HCT116 (cell line): ENCODE measurements at regions of chr1 and their contacts with region 1.

Region 1: DNA sequence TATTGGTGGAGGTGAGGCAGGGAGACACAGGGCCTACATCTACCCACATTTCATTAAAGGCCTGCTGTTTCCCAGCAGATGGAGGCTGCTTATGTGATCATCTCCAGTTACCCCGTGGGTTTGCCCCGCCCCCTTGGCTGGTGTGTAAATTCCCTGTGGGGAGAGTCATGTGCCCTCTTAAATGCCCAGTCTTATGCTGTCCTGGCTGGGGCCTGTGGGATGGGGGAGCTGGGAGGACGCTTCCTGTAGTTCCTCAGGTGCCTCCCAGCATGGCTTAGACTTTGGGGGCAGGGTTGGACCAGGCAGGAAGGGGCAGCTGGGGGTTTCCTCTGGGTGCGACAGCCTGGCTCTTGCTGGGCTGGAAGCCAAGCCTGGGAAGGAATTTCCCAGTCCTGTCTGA is 15.5 kb upstream of the CITED4 start:
- DNase-seq: no peak
- ATAC-seq: peak; percentile 68
- H3K4me3 ChIP-seq: peak overlapping the region in 1 of 2 experiments; percentile 13; a peak in 1 of 4 replicates
- H3K27ac ChIP-seq: peak overlapping the region; percentile 43
- H3K4me1 ChIP-seq: peaks cover 36 to 78% of the 10 kb centered on the region in 2 experiments
- H3K27me3 ChIP-seq: no peaks in the 10 kb centered on the region
- CTCF ChIP-seq: no peak
- POLR2A ChIP-seq: no peak
- RAD21 ChIP-seq: no peak

Region 2: DNA sequence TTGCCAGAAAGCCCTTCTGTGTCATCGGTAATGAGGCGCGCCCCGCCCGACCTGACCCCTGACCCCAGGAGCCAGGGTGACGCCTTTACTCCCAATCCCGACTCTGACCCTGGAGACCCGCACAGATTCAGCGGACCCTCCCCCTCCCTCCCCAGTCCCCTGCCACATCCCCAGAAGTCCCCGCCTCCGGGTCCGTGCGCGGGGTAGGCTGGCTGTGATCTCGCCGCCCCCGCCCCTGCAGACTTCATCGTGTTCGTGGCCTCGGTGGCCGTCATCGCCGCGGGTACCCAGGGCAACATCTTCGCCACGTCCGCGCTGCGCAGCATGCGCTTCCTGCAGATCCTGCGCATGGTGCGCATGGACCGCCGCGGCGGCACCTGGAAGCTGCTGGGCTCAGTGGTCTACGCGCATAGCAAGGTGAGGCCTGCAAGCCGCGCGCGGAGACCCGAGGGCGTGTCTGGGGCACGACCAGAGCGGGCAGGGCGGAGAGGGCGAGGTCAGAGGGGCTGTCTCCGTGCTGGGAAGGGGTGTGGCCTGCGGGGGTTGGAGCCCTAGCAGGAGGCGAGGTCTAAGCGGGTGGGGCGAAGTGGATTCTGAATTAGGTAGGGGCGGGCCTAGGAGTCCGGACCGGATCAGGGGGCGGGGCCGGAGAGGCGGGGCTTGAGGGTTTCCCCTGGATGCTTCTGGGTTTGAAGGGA is 59.3 kb before region 1 on chr1:
- CTCF ChIA-PET with region 1: no interaction called
- POLR2A ChIA-PET with region 1: no interaction called
- RAD21 ChIA-PET with region 1: no interaction called
- intact Hi-C with region 1: no loop called
- DNase-seq: no peak
- ATAC-seq: peak; percentile 81
- H3K4me3 ChIP-seq: no peak overlapping the region
- H3K27ac ChIP-seq: no peak overlapping the region
- H3K4me1 ChIP-seq: no peaks in the 10 kb centered on the region
- H3K27me3 ChIP-seq: no peaks in the 10 kb centered on the region
- CTCF ChIP-seq: no peak
- POLR2A ChIP-seq: no peak
- RAD21 ChIP-seq: no peak

Region 3: GRCh38 chr1:40862008-40862863 is 15.5 kb before region 1 on chr1 and contains the start of gene CITED4:
- CTCF ChIA-PET with region 1: interaction called, 8 read pairs
- POLR2A ChIA-PET with region 1: interaction called, 12 read pairs
- RAD21 ChIA-PET with region 1: interaction called in 1 of 2 experiments, 3 read pairs
- intact Hi-C with region 1: no loop called
- DNase-seq: peak; percentile 91
- ATAC-seq: peak; percentile 96
- H3K4me3 ChIP-seq: peak within 1 kb of the TSS; percentile 33 to 62
- H3K27ac ChIP-seq: peak within 1 kb of the TSS; percentile 43; the same call in 1 of the 2 replicates
- H3K4me1 ChIP-seq: peaks cover 11 to 37% of the 10 kb centered on the region in 2 experiments; a peak in 3 of 4 replicates
- H3K27me3 ChIP-seq: no peaks in the 10 kb centered on the region
- CTCF ChIP-seq: peak; percentile 39 to 78 (median 45)
- POLR2A ChIP-seq: no peak
- RAD21 ChIP-seq: peak; percentile 91
- total RNA-seq, gene CITED4: 7.8 TPM

Region 4: DNA sequence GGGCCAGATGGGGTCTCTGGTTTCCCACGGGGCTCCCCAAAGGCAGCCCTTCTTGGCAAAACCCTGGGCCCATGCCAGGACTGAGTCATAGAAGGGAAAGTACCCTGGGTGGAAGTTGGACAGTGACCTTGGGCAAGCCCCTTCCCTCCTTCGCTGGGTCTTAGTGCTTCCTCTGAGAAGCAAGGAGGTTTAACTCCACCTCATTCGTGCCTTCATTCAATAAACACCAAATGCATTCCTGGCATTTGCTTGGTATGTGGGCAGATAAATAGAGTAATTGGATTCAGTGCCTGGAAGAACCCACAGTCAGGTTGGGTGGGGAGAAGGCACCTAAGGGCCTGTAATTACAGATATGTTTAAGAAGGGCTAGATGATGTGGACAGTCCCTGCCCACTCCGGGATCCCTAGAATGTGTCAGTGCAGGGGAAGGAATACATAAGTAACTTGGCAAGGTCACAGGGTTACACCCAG is 20.8 kb after region 1 on chr1:
- CTCF ChIA-PET with region 1: no interaction called
- POLR2A ChIA-PET with region 1: interaction called, 8 read pairs
- RAD21 ChIA-PET with region 1: no interaction called
- intact Hi-C with region 1: loop called (anchors 2 kb)
- DNase-seq: no peak
- ATAC-seq: 0 out of 2 replicates have a peak, but pooled peaks have one; percentile 3
- H3K4me3 ChIP-seq: peak overlapping the region in 1 of 2 experiments; percentile 43; a peak in 1 of 4 replicates
- H3K27ac ChIP-seq: peak overlapping the region; percentile 70
- H3K4me1 ChIP-seq: peaks cover 37 to 71% of the 10 kb centered on the region in 2 experiments
- H3K27me3 ChIP-seq: no peaks in the 10 kb centered on the region
- CTCF ChIP-seq: no peak
- POLR2A ChIP-seq: no peak
- RAD21 ChIP-seq: no peak

Region 5: GRCh38 chr1:40971966-40972365 is 94.3 kb after region 1 on chr1:
- CTCF ChIA-PET with region 1: no interaction called
- POLR2A ChIA-PET with region 1: no interaction called
- RAD21 ChIA-PET with region 1: no interaction called
- intact Hi-C with region 1: no loop called
- DNase-seq: no peak
- ATAC-seq: no peak
- H3K4me3 ChIP-seq: no peak overlapping the region
- H3K27ac ChIP-seq: no peak overlapping the region
- H3K4me1 ChIP-seq: peaks cover 16 to 40% of the 10 kb centered on the region in 2 experiments
- H3K27me3 ChIP-seq: no peaks in the 10 kb centered on the region
- CTCF ChIP-seq: no peak
- POLR2A ChIP-seq: no peak
- RAD21 ChIP-seq: no peak